ENCODE measurements at regions of chr7 and their contacts with region 1.

Region 1: DNA sequence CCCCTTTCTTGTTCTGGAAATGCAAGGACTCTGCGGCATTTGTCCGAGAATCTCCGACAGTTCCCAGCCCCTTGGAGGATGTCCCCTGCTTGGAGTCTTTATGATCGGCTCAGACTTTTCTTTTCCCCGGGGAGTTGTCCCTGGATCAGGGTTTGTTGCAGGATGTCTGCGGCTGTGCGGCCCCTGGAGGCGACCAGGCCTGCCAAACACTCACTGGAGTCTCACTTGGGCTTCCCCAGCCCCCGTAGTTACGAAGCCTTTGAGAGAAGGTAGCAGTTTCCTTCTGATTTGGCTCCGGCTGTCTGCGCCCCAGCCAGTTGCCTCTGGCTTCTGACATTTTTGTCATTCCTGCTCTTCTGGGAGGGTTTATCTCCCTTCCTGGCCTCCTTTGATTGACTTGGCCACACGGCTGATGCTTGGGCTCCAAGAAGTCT is 16.1 kb downstream of the COL26A1 start:
- DNase-seq: no peak
- ATAC-seq: no peak
- H3K4me3 ChIP-seq: no peak overlapping the region
- H3K4me3 Mint-ChIP-seq: no peak overlapping the region
- H3K27ac ChIP-seq: no peak overlapping the region
- H3K27ac Mint-ChIP-seq: no peak overlapping the region
- H3K4me1 ChIP-seq: no peaks in the 10 kb centered on the region
- H3K4me1 Mint-ChIP-seq: no peaks in the 10 kb centered on the region
- H3K27me3 ChIP-seq: peaks cover 0 to 12% of the 10 kb centered on the region in 2 experiments
- H3K27me3 Mint-ChIP-seq: peaks cover 0 to under 1% of the 10 kb centered on the region in 2 donors

Region 2: GRCh38 chr7:101357433-101357832 is 21.3 kb before region 1 on chr7:
- CTCF ChIA-PET with region 1: no interaction called
- POLR2A ChIA-PET with region 1: no interaction called
- DNase-seq: no peak
- ATAC-seq: no peak
- H3K4me3 ChIP-seq: no peak overlapping the region
- H3K4me3 Mint-ChIP-seq: no peak overlapping the region
- H3K27ac ChIP-seq: no peak overlapping the region
- H3K27ac Mint-ChIP-seq: no peak overlapping the region
- H3K4me1 ChIP-seq: peaks cover 0 to under 1% of the 10 kb centered on the region in 2 experiments
- H3K4me1 Mint-ChIP-seq: peaks cover 0 to 8% (median 7%) of the 10 kb centered on the region in 3 donors
- H3K27me3 ChIP-seq: peaks cover 0 to 42% of the 10 kb centered on the region in 2 experiments
- H3K27me3 Mint-ChIP-seq: peaks cover 11 to 19% of the 10 kb centered on the region in 2 donors

Region 3: DNA sequence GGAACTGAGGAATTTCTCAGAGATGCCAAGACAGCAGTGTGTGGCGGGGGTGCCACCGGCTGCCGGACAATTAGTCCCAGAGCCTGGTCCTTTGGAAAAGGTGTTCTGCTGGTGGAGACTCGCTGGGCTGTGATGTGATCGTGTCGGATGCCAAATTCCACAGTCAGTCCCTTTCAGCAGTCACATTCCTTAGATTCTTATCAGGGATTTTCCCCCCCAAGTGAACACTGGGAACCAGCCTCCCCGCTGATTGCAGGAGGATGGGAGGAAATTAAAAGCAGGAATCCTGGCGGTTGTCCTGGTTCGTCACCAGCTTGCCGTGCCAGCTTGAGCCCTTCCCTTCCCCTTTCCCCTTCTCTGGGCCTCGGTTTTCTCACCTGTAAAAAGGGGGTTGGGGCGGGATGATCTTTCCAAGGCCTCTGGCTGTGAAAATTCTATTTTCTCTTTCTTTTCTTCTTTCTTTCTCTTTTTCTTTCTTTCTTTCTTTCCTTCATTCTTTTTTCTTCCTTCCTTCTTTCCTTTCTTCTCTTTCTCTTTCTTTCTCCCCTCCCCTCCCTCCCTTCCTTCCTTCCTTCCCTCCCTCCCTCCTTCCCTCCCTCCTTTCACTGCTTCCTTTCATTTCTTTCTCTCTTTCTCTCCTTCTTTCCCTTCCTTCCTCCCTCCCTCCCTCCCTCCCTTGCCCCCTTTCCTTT is 23.5 kb after region 1 on chr7:
- CTCF ChIA-PET with region 1: no interaction called
- POLR2A ChIA-PET with region 1: no interaction called
- DNase-seq: no peak
- ATAC-seq: no peak
- H3K4me3 ChIP-seq: no peak overlapping the region
- H3K4me3 Mint-ChIP-seq: no peak overlapping the region
- H3K27ac ChIP-seq: no peak overlapping the region
- H3K27ac Mint-ChIP-seq: no peak overlapping the region
- H3K4me1 ChIP-seq: no peaks in the 10 kb centered on the region
- H3K4me1 Mint-ChIP-seq: peaks cover 0 to 4% (median 0%) of the 10 kb centered on the region in 3 donors
- H3K27me3 ChIP-seq: peaks cover 0 to 42% of the 10 kb centered on the region in 2 experiments
- H3K27me3 Mint-ChIP-seq: peaks cover 13 to 36% of the 10 kb centered on the region in 2 donors

Region 4: GRCh38 chr7:101426303-101427011 is 47.7 kb after region 1 on chr7:
- CTCF ChIA-PET with region 1: no interaction called
- POLR2A ChIA-PET with region 1: no interaction called
- DNase-seq: no peak
- ATAC-seq: no peak
- H3K4me3 ChIP-seq: no peak overlapping the region
- H3K4me3 Mint-ChIP-seq: no peak overlapping the region
- H3K27ac ChIP-seq: no peak overlapping the region
- H3K27ac Mint-ChIP-seq: no peak overlapping the region
- H3K4me1 ChIP-seq: peaks cover 0 to 2% of the 10 kb centered on the region in 2 experiments
- H3K4me1 Mint-ChIP-seq: peaks cover 6 to 12% (median 7%) of the 10 kb centered on the region in 3 donors
- H3K27me3 ChIP-seq: peaks cover 0 to 6% of the 10 kb centered on the region in 2 experiments
- H3K27me3 Mint-ChIP-seq: peaks cover 4 to 6% of the 10 kb centered on the region in 2 donors

Region 5: GRCh38 chr7:102236592-102237287 is 858.0 kb after region 1 on chr7:
- CTCF ChIA-PET with region 1: interaction called in 1 of 2 experiments, 12 read pairs
- POLR2A ChIA-PET with region 1: no interaction called
- DNase-seq: peak in 28 of 35 experiments; percentile 2 to 52 (median 26)
- ATAC-seq: peak in 1 of 4 experiments; percentile 48
- H3K4me3 ChIP-seq: no peak overlapping the region
- H3K4me3 Mint-ChIP-seq: no peak overlapping the region
- H3K27ac ChIP-seq: no peak overlapping the region
- H3K27ac Mint-ChIP-seq: no peak overlapping the region
- H3K4me1 ChIP-seq: no peaks in the 10 kb centered on the region
- H3K4me1 Mint-ChIP-seq: no peaks in the 10 kb centered on the region
- H3K27me3 ChIP-seq: no peaks in the 10 kb centered on the region
- H3K27me3 Mint-ChIP-seq: no peaks in the 10 kb centered on the region

Measured in T-cell (primary cell).